Activated CD4-positive, alpha-beta T cell treated with anti-CD3 and anti-CD28 coated beads, Interleukin-2, amount 10 ng/mL, durations not matched to agents 7 days and 5 days (primary cell): ENCODE measurements at regions of chr22 and their contacts with region 1.

Region 1: GRCh38 chr22:29811377-29812021 is 26.6 kb downstream of the ASCC2 start:
- DNase-seq: no peak
- H3K4me3 Mint-ChIP-seq: no peak overlapping the region
- H3K27ac Mint-ChIP-seq: no peak overlapping the region
- H3K4me1 Mint-ChIP-seq: no peaks in the 10 kb centered on the region
- H3K27me3 Mint-ChIP-seq: no peaks in the 10 kb centered on the region

Region 2: GRCh38 chr22:30159561-30160353 is 348.3 kb after region 1 on chr22:
- CTCF ChIA-PET with region 1: no interaction called
- POLR2A ChIA-PET with region 1: interaction called, 11 read pairs
- DNase-seq: no peak
- H3K4me3 Mint-ChIP-seq: no peak overlapping the region
- H3K27ac Mint-ChIP-seq: peak overlapping the region; percentile 73
- H3K4me1 Mint-ChIP-seq: peaks cover 35% of the 10 kb centered on the region
- H3K27me3 Mint-ChIP-seq: no peaks in the 10 kb centered on the region